ENCODE measurements at regions of chr6 and their contacts with region 1.

Region 1: DNA sequence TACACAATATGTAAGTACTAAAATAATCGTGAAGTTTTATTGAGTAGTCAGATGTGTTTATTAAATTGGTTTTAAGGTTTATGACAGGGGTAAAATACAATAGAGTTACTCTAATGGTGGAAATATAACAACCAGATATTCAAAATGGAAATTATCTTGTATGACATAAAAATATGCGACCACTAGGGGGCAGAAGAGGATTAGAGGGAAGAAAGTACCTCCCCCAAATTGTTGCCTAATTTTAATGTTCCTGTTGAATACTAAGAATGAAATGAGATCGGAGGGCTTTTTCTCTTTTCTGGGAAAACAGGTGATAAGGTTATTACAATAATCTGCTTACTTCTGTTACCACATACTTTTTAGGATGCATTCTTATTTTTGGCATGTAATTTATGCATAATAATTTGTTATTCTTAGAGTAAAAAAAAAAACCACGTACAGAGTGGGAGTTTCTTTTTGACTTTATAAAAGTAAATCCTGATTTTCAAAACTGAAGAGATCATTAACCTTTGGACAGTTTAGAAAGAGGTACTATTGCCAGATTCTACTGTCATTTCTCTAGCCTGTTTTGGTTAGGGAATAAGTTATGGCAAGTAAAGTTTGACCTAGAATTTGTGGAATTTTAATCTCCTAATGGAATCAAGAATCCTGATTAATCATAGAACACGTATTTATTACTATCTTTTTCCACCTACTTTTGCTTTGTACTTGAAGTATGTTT is 159.2 kb downstream of the CD109 start:
- DNase-seq: peak in 1 of 3 donors; percentile 49
- ATAC-seq: no peak
- H3K4me3 ChIP-seq: no peak overlapping the region
- H3K4me1 ChIP-seq: no peaks in the 10 kb centered on the region
- CTCF ChIP-seq: no peak

Region 2: DNA sequence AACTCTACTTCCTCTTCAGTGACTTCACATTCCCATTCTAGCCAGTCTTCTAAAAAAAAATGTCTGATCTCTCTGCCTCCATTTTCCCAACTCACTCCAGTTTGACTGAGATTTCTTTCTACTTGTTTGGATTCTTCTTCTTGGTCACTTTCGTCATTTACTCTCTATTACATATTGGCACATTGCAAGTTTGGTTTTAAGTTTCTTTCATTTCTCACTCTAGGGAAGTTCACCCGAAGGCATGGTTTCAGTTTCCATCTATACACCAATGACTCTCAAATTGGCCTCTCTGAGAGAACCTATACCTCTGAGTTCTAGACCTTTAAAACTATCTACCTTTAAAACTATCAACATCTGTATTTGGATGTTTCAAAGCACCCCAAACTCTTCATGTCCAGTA is 107.9 kb before region 1 on chr6:
- intact Hi-C with region 1: loop called in 1 of 2 experiments (anchors 10 kb)
- DNase-seq: no peak
- ATAC-seq: peak; percentile 40
- H3K4me3 ChIP-seq: no peak overlapping the region
- H3K4me1 ChIP-seq: no peaks in the 10 kb centered on the region
- CTCF ChIP-seq: no peak

Region 3: GRCh38 chr6:73798592-73798991 is 56.6 kb before region 1 on chr6:
- intact Hi-C with region 1: no loop called
- DNase-seq: peak in 1 of 3 donors; percentile 30
- ATAC-seq: peak; percentile 18
- H3K4me3 ChIP-seq: no peak overlapping the region
- H3K4me1 ChIP-seq: no peaks in the 10 kb centered on the region
- CTCF ChIP-seq: no peak

Measured in mucosa of descending colon (tissue), 3 donors.